Calu3 (cell line): ENCODE measurements at regions of chr5 and their contacts with region 1.

Region 1: GRCh38 chr5:168165221-168165965 is 126.1 kb upstream of the WWC1 start:
- DNase-seq: peak; percentile 33
- H3K4me3 Mint-ChIP-seq: no peak overlapping the region
- H3K27ac Mint-ChIP-seq: no peak overlapping the region
- H3K4me1 Mint-ChIP-seq: peaks cover 38% of the 10 kb centered on the region
- H3K27me3 Mint-ChIP-seq: peaks cover 11% of the 10 kb centered on the region
- CTCF ChIP-seq: no peak

Region 2: DNA sequence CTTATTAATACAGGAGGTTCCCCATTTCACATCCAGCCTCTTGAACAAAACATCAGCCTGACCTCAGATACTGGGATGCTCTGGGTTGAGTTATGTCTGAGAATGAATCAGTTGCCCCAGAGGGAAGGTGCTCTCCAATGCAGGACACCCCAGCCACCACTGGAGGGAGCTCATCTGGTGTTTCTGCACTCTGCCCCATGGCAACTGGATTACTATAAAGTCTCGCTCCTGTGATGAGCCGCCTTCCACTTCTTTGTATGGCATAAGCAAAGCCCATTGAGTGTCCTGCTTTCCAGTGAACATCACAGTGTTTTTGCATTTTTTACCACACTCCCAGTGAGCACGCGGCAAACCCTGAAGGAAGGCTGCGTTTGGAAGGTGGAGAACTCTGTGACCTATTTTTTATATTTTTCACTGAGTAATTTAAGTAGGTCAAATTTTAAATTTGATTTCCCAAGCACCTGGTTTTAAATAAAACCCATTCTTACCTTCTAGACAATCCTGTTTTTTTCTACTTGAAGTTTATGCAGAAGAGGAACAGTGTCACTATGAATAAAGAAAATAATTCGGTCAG is 50.9 kb before region 1 on chr5:
- CTCF ChIA-PET with region 1: interaction called, 5 read pairs
- intact Hi-C with region 1: loop called (anchors 2 kb)
- DNase-seq: peak; percentile 90
- H3K4me3 Mint-ChIP-seq: no peak overlapping the region
- H3K27ac Mint-ChIP-seq: no peak overlapping the region
- H3K4me1 Mint-ChIP-seq: no peaks in the 10 kb centered on the region
- H3K27me3 Mint-ChIP-seq: peaks cover 59% of the 10 kb centered on the region
- CTCF ChIP-seq: peak; percentile 78